Common myeloid progenitor, CD34-positive (primary cell): ENCODE measurements at regions of chr15 and their contacts with region 1.

Region 1: DNA sequence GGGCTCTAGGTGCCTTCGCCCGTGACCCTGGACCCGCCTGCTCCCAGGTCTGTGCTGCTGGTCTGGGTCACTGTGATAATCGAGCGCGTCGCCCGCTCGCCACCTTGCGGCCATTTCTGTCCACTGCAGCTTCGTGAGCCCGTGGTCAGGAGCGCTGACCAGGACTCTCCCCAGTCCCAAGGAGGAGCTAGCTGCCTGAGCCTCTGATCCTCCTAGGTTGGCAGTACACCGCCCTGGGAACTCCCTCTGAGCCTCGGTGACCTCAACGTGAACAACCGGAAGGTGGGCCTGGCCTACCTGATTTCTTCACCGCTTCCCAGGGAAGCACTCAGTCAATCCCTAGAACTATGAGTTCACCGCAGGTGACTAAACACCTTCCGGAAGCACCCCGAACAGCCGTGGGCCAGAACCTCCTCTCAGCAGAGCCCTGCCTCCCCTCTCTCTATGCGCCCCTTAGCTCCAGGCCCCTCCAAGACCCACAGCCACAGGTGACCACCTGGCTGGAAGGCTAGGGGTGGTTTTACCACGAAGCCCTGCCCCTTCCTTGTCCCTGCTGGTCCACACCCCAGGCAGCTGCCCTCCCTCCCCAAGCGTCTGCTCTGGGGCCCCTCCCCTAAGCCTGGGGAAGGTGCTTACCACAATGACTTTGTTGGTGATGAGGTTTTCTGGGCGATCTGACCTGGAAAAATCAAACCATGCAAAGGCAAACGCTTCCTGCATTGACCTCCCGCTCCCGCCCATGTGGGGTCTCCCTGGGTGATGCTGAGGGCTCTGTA is 9.7 kb downstream of the PLA2G4D start:
- DNase-seq: peak; percentile 12 to 70 (median 54)
- H3K4me3 ChIP-seq: peak overlapping the region in 2 of 7 experiments; percentile 19 to 30
- H3K27ac ChIP-seq: no peak overlapping the region
- H3K4me1 ChIP-seq: peaks cover 0 to 17% (median 9%) of the 10 kb centered on the region in 4 experiments
- H3K27me3 ChIP-seq: peaks cover 0 to 2% (median 0%) of the 10 kb centered on the region in 5 experiments

Region 2: DNA sequence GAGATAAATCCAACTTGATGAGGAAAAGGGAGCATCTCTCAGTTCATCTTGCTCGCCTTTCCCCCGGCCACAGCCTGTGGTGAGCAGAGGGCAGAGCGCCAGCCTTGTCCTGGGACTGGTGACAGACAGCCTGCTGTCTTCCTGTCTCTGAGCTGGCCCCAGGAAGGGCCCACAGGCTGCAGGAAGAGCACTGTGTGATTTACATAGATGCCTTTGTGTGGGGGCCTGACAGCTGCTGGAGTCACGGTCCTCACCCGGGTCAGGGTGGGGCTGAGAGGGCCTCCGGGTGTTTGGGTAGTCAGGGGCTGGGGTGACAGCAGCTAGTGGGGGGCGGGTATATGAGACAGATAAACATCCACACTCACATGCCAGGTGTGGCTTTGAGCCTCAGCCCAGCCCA is 19.6 kb before region 1 on chr15:
- CTCF ChIA-PET with region 1: interaction called, 190 read pairs
- POLR2A ChIA-PET with region 1: no interaction called
- DNase-seq: peak in 2 of 3 donors; percentile 20 to 33
- H3K4me3 ChIP-seq: no peak overlapping the region
- H3K27ac ChIP-seq: no peak overlapping the region
- H3K4me1 ChIP-seq: peaks cover 0 to 19% (median 14%) of the 10 kb centered on the region in 4 experiments
- H3K27me3 ChIP-seq: peaks cover 0 to 3% (median 0%) of the 10 kb centered on the region in 5 experiments

Region 3: GRCh38 chr15:42130246-42130986 is 45.8 kb after region 1 on chr15:
- CTCF ChIA-PET with region 1: interaction called, 12 read pairs
- POLR2A ChIA-PET with region 1: interaction called, 4 read pairs
- DNase-seq: no peak
- H3K4me3 ChIP-seq: no peak overlapping the region
- H3K27ac ChIP-seq: no peak overlapping the region
- H3K4me1 ChIP-seq: no peaks in the 10 kb centered on the region
- H3K27me3 ChIP-seq: no peaks in the 10 kb centered on the region